ENCODE measurements at regions of chr4 and their contacts with region 1.

Region 1: DNA sequence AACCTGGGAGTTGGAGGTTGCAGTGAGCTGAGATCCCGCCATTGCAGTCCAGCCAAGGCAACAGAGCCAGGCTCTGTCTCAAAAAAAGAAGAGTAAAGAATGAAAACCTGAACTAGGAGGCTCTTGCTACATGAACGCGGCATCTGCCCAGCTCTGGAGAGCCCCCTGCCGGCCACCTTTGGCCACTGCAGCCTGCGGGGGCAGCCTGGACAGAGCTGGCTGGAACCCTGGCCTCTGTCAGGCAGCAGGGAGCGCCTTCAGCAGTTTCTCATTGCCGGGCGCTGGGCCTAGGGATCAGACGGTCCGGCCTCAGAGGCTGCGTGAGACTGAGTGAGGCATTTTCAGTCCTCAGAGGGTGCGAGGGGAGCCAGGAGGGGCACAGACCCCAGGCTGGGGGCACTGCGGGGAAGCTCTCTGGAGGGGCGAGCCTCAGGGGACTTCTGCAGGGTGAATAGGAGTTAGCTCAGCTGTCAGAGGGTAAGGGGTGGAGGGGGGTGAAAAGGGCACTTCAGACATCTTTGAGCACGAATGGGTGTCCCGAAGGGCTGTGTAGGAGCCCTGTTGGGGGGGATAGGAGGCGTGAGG is 17.5 kb downstream of the DOK7 start:
- DNase-seq: peak; percentile 66 to 100
- H3K4me3 ChIP-seq: peak overlapping the region in 2 of 4 experiments; percentile 23 to 49; a peak in 4 of 8 replicates
- H3K27ac ChIP-seq: no peak overlapping the region
- H3K4me1 ChIP-seq: peaks cover 0 to 30% (median 22%) of the 10 kb centered on the region in 4 experiments; a peak in 6 of 7 replicates
- H3K27me3 ChIP-seq: peaks cover 7 to 69% (median 48%) of the 10 kb centered on the region in 4 experiments
- CTCF ChIP-seq: peak in 2 of 3 experiments; percentile 97 to 98; a peak in 3 of 4 replicates
- EP300 ChIP-seq: no peak
- POLR2A ChIP-seq: no peak
- RAD21 ChIP-seq: peak; percentile 78 to 88

Region 2: GRCh38 chr4:3369781-3370674 is 110.6 kb before region 1 on chr4:
- CTCF ChIA-PET with region 1: interaction called, 10 read pairs
- POLR2A ChIA-PET with region 1: no interaction called
- DNase-seq: peak in 1 of 2 experiments; percentile 54
- H3K4me3 ChIP-seq: peak overlapping the region in 3 of 4 experiments; percentile 8 to 47 (median 14); a peak in 5 of 8 replicates
- H3K27ac ChIP-seq: no peak overlapping the region
- H3K4me1 ChIP-seq: peaks cover 7 to 33% (median 21%) of the 10 kb centered on the region in 4 experiments
- H3K27me3 ChIP-seq: peaks cover 0 to 13% (median 10%) of the 10 kb centered on the region in 4 experiments; a peak in 3 of 7 replicates
- CTCF ChIP-seq: no peak
- EP300 ChIP-seq: no peak
- POLR2A ChIP-seq: no peak
- RAD21 ChIP-seq: no peak

Region 3: DNA sequence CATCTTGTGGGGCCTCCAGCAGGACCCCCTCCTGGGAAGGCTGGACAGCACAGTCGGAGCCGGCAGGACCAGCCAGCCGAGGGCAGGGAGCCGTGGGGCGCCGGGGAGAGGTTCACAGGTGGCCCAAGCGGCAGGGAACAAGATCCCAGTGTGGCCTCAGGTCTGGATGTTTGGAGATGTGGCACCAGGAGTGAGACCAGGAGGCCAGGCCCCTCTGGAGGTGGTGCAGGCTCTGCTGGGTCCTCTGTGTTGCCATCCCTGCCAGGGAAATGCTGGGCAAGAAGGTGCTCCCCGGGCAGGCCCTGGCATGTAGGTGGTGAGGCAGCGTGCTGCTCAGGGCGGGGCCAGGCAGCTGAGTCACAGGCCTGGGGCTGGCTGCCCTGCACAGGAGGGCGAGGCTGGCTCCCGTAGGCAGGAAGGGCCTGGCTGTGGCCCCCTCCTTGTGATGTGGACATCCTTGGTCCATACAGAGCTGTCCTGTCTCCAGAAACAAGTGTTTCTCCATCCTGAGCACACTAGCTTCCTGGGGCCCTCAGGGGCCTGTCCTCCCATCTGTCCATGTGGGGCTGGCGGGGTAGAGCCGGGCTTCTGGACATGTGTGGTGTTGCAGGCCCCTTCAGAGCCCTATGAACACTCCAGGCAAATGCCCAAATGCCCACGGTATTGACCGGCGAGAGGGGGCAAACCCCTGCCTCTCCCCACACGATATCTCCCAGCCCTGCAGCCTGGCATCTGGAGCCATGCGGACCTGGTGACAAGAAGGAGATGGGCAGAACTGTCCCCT is 43.6 kb before region 1 on chr4:
- CTCF ChIA-PET with region 1: interaction called, 40 read pairs
- POLR2A ChIA-PET with region 1: no interaction called
- DNase-seq: no peak
- H3K4me3 ChIP-seq: no peak overlapping the region
- H3K27ac ChIP-seq: no peak overlapping the region
- H3K4me1 ChIP-seq: peaks cover 0 to 5% (median 2%) of the 10 kb centered on the region in 4 experiments; a peak in 3 of 7 replicates
- H3K27me3 ChIP-seq: no peaks in the 10 kb centered on the region; a peak in 1 of 7 replicates
- CTCF ChIP-seq: no peak
- EP300 ChIP-seq: no peak
- POLR2A ChIP-seq: no peak
- RAD21 ChIP-seq: no peak

Region 4: GRCh38 chr4:3461478-3462291 is 18.9 kb before region 1 on chr4:
- CTCF ChIA-PET with region 1: interaction called, 48 read pairs
- POLR2A ChIA-PET with region 1: no interaction called
- DNase-seq: no peak
- H3K4me3 ChIP-seq: no peak overlapping the region
- H3K27ac ChIP-seq: no peak overlapping the region
- H3K4me1 ChIP-seq: peaks cover 0 to 6% (median 0%) of the 10 kb centered on the region in 4 experiments; a peak in 1 of 7 replicates
- H3K27me3 ChIP-seq: peaks cover 5 to 66% (median 39%) of the 10 kb centered on the region in 4 experiments
- CTCF ChIP-seq: no peak
- EP300 ChIP-seq: no peak
- POLR2A ChIP-seq: no peak
- RAD21 ChIP-seq: no peak

Region 5: DNA sequence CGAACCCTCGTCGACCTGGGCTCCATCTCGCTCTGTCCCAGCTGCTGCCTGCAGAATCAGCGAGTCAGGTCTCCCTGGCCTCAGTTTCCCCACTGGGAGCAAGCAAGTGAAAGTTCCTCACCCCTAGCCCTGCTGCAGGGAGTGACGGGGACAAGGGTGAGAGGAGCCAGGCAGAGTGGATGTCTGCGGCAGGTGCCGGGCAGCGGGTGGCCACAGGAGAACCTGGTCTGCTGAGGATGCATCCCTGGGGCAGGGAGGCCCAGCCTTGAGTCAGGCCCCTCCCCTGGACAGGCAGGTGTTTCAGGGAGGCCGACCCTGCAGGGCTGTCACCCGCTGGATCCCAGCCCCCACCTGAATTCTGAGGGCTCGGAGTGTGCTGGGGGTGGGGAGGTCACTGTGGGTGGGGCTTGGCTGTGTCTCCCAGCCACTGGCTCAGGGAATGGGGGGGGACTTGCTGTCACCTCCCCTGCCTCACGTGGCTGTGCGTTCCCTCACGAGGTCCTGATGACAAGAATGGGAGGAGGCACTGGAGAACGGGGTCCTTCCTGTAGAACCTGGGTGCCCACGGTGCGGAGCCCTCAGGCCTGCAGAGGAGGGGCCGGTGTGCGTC is 18.4 kb after region 1 on chr4:
- CTCF ChIA-PET with region 1: interaction called, 14 read pairs
- POLR2A ChIA-PET with region 1: interaction called, 5 read pairs
- DNase-seq: no peak
- H3K4me3 ChIP-seq: no peak overlapping the region
- H3K27ac ChIP-seq: no peak overlapping the region
- H3K4me1 ChIP-seq: peaks cover 0 to 6% (median 3%) of the 10 kb centered on the region in 4 experiments; a peak in 5 of 7 replicates
- H3K27me3 ChIP-seq: peaks cover 14 to 44% (median 34%) of the 10 kb centered on the region in 4 experiments; a peak in 6 of 7 replicates
- CTCF ChIP-seq: no peak
- EP300 ChIP-seq: no peak
- POLR2A ChIP-seq: no peak
- RAD21 ChIP-seq: no peak

Measured in H1 (cell line).